ENCODE measurements at regions of chr10 and their contacts with region 1.

Region 1: GRCh38 chr10:63206997-63207811 is 74.1 kb downstream of the NRBF2 start:
- DNase-seq: no peak
- H3K4me3 Mint-ChIP-seq: peak overlapping the region; percentile 56
- H3K27ac Mint-ChIP-seq: peak overlapping the region; percentile 78
- H3K4me1 Mint-ChIP-seq: peaks cover 66% of the 10 kb centered on the region
- H3K27me3 Mint-ChIP-seq: no peaks in the 10 kb centered on the region

Region 2: DNA sequence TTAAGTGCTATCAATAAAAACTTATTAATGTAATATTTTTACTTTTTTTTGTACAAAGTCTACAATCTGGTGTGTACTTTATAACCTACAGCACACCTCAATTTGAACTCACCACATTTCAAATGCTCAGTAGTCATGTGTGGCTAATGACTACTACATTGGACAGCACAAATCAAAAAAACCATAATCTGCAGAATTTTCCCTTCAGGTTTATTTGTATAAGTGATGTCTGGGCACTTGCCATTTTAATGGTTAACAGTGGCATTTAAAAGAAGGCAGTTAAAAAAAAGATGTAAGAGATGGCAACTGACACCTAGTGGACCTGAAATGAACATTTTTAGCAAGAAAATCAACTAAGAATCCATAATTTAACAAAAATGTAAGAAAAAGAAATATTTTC is 198.7 kb before region 1 on chr10:
- intact Hi-C with region 1: no loop called
- DNase-seq: no peak
- H3K4me3 Mint-ChIP-seq: no peak overlapping the region
- H3K27ac Mint-ChIP-seq: no peak overlapping the region
- H3K4me1 Mint-ChIP-seq: peaks cover 16% of the 10 kb centered on the region
- H3K27me3 Mint-ChIP-seq: peaks cover 9% of the 10 kb centered on the region

Region 3: DNA sequence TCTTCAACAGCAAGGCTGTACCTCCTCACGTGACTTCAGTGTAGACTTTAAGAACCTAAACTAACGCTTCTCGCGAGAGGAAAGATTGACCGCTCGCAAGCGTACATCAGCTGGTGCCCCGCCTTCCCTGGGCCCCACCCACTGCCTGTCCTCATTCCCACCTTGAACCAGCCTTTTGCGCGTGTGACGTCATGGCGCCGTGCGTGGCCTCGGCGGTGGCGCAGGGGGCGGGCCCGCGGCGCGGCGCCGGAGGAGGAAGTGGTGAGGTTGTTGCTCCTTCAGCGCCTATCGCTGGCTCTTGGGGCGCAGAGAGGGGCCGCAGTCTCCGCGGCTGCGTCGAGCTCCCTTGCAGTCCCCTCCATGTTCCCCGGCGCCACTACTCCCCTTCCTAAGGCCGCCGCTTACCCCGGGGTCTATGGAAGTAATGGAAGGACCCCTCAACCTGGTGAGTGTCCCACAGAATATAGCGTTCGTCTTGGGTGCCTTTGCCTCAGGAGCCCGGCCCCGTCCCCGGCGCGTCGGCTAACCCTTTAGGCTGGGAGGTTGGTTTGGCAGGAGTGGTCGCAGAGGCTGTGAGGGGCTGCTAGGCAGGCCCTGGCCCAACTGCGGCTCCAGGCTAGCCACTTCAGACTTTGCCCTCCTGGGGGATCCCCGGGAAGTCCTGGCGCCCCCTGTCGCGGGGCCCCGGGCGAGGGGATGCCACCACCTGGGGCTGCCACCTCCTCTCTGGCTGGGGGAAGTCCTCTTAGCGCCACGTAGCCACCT is 74.0 kb before region 1 on chr10 and contains the start of gene NRBF2:
- intact Hi-C with region 1: no loop called
- DNase-seq: peak; percentile 97
- H3K4me3 Mint-ChIP-seq: peak within 1 kb of the TSS; percentile 91
- H3K27ac Mint-ChIP-seq: peak within 1 kb of the TSS; percentile 83
- H3K4me1 Mint-ChIP-seq: peaks cover 32% of the 10 kb centered on the region
- H3K27me3 Mint-ChIP-seq: peaks cover 3% of the 10 kb centered on the region
- total RNA-seq, gene NRBF2: 30.0 and 30.8 TPM in 2 replicates

Region 4: DNA sequence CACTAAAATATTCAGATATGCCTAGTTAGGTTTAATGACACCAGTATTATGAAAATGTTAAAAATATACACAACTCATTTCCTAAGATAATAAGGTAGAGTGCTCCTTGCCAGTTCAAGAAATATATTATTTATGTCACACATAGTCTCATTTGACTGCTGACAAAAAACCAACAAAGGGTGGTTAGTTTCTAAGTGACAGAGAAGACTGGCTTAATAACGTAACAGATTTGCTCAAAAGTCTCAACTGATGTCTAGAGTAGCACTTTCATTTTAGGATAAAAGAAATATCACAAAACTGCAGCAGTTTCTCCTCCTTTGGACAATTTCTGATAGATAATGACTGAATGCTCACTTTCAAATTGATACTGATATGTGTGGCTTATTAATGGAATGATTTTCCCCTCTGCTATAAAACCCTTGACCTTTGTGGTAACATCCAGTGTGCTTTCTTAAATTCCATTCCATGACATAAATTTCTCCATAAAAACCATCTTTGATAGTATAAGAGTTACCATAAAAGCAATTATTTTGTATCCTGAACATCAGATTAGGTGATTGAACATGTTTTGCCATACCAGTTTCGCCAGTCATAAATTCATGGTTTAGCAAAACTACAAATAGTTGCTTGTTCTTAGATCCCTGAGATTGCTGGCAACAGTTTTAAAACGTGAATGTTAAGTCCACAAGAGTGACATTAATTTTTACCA is 20.2 kb after region 1 on chr10:
- intact Hi-C with region 1: loop called (anchors 2 kb)
- DNase-seq: no peak
- H3K4me3 Mint-ChIP-seq: peak overlapping the region; percentile 61
- H3K27ac Mint-ChIP-seq: peak overlapping the region; percentile 79
- H3K4me1 Mint-ChIP-seq: peaks cover 34% of the 10 kb centered on the region
- H3K27me3 Mint-ChIP-seq: no peaks in the 10 kb centered on the region